Naive thymus-derived CD8-positive, alpha-beta T cell (primary cell): ENCODE measurements at regions of chr2 and their contacts with region 1.

Region 1: GRCh38 chr2:38602732-38603401 is at the start of gene HNRNPLL:
- DNase-seq: peak; percentile 85 to 95 (median 89)
- ATAC-seq: peak; percentile 85 to 87
- H3K4me3 Mint-ChIP-seq: peak within 1 kb of the TSS; percentile 84 to 98 (median 96)
- H3K27ac Mint-ChIP-seq: peak within 1 kb of the TSS; percentile 66 to 94 (median 91)
- H3K4me1 Mint-ChIP-seq: peaks cover 15 to 47% (median 41%) of the 10 kb centered on the region in 4 donors
- H3K27me3 Mint-ChIP-seq: no peaks in the 10 kb centered on the region
- polyA plus RNA-seq, gene HNRNPLL: 8.0 to 13.1 (median 11.5) TPM

Region 2: GRCh38 chr2:38496927-38497669 is 105.8 kb before region 1 on chr2:
- POLR2A ChIA-PET with region 1: no interaction called
- DNase-seq: no peak
- ATAC-seq: no peak
- H3K4me3 Mint-ChIP-seq: no peak overlapping the region
- H3K27ac Mint-ChIP-seq: no peak overlapping the region
- H3K4me1 Mint-ChIP-seq: peaks cover 2 to 9% (median 7%) of the 10 kb centered on the region in 4 donors
- H3K27me3 Mint-ChIP-seq: peaks cover 2 to 12% (median 3%) of the 10 kb centered on the region in 5 donors

Region 3: DNA sequence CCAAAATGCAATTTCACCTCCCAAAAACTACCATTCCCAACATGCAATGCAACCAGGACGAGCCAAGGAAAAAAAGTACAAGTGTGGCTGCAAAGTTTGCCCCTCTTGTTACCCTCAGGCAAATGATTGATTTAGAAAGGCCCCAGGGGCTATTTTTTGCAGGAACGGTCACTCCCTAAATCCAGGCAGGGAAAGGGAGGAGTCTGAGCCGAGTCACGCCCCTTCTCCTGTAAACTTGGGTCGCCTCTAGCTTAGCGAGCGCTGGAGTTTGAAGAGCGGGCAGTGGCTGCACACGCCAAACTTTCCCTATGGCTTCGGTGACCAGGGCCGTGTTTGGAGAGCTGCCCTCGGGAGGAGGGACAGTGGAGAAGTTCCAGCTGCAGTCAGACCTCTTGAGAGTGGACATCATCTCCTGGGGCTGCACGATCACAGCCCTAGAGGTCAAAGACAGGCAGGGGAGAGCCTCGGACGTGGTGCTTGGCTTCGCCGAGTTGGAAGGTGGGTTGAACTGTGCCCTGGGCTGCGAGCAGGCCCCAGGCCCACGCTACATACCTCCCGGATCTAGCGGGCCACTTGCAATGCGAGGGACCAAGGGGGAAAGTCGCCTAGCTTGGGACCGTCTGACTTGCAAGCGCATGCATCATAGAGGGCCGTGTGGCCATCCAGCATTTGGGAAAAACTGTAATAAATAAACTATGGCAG is 63.1 kb after region 1 on chr2 and contains the start of gene GALM:
- POLR2A ChIA-PET with region 1: interaction called, 18 read pairs
- DNase-seq: peak in 8 of 10 donors; percentile 13 to 68 (median 46)
- ATAC-seq: peak; percentile 40 to 56
- H3K4me3 Mint-ChIP-seq: peak within 1 kb of the TSS; percentile 82 to 89 (median 87)
- H3K27ac Mint-ChIP-seq: peak within 1 kb of the TSS; percentile 81 to 96 (median 93)
- H3K4me1 Mint-ChIP-seq: peaks cover 13 to 53% (median 38%) of the 10 kb centered on the region in 4 donors
- H3K27me3 Mint-ChIP-seq: no peaks in the 10 kb centered on the region
- polyA plus RNA-seq, gene GALM: 10.6 to 15.6 (median 13.9) TPM